ENCODE measurements at regions of chr10 and their contacts with region 1.

Region 1: GRCh38 chr10:48444266-48444665 is 137.8 kb downstream of the MAPK8 start:
- DNase-seq: peak; percentile 49
- ATAC-seq: peak; percentile 62
- H3K4me3 ChIP-seq: no peak overlapping the region
- H3K27ac ChIP-seq: no peak overlapping the region
- H3K4me1 ChIP-seq: peaks cover 10% of the 10 kb centered on the region
- H3K27me3 ChIP-seq: no peaks in the 10 kb centered on the region
- CTCF ChIP-seq: peak; percentile 47

Region 2: GRCh38 chr10:48506147-48506917 is 62.1 kb after region 1 on chr10:
- CTCF ChIA-PET with region 1: interaction called, 16 read pairs
- POLR2A ChIA-PET with region 1: no interaction called
- intact Hi-C with region 1: loop called (anchors 1 kb)
- DNase-seq: peak; percentile 83
- ATAC-seq: peak; percentile 89
- H3K4me3 ChIP-seq: no peak overlapping the region
- H3K27ac ChIP-seq: no peak overlapping the region
- H3K4me1 ChIP-seq: peaks cover 9% of the 10 kb centered on the region; the same call in 1 of the 2 replicates
- H3K27me3 ChIP-seq: no peaks in the 10 kb centered on the region
- CTCF ChIP-seq: peak; percentile 97